ENCODE measurements at regions of chr20 and their contacts with region 1.

Region 1: GRCh38 chr20:50348096-50348495 is 157.5 kb downstream of the CEBPB start:
- DNase-seq: no peak
- ATAC-seq: peak; percentile 13
- H3K4me3 ChIP-seq: no peak overlapping the region
- H3K4me1 ChIP-seq: peaks cover 5% of the 10 kb centered on the region
- CTCF ChIP-seq: no peak

Region 2: GRCh38 chr20:49713753-49714712 is 634.1 kb before region 1 on chr20 and contains the start of gene B4GALT5:
- intact Hi-C with region 1: no loop called
- DNase-seq: peak; percentile 71 to 85 (median 83)
- ATAC-seq: peak; percentile 85
- H3K4me3 ChIP-seq: peak within 1 kb of the TSS; percentile 88
- H3K4me1 ChIP-seq: peaks cover 18% of the 10 kb centered on the region
- CTCF ChIP-seq: no peak
- total RNA-seq, gene B4GALT5: 52.4 to 65.1 (median 60.2) TPM

Region 3: GRCh38 chr20:50146732-50147662 is 201.1 kb before region 1 on chr20:
- intact Hi-C with region 1: no loop called
- DNase-seq: peak; percentile 62 to 78 (median 68)
- ATAC-seq: peak; percentile 72
- H3K4me3 ChIP-seq: no peak overlapping the region
- H3K4me1 ChIP-seq: peaks cover 35% of the 10 kb centered on the region
- CTCF ChIP-seq: no peak

Region 4: DNA sequence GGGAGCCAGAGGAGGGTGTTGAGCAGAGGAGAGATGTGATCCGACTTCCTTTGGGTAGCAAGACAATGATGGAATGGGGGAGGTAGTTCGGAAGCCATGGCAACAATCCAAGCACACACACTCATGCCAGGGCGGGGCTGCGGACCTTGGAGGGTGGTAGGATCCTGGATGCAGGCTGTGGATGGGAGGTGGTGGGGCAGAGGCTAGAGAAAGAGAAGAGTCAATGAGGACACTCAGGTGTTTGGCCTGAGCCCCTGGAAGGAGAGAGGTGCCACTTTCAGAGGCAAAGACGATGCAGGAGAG is 25.8 kb after region 1 on chr20:
- intact Hi-C with region 1: loop called in 1 of 2 experiments (anchors 2 kb)
- DNase-seq: no peak
- ATAC-seq: peak; percentile 48
- H3K4me3 ChIP-seq: no peak overlapping the region
- H3K4me1 ChIP-seq: peaks cover 22% of the 10 kb centered on the region
- CTCF ChIP-seq: no peak

Region 5: GRCh38 chr20:50837532-50838506 is 489.7 kb after region 1 on chr20:
- intact Hi-C with region 1: no loop called
- DNase-seq: no peak
- ATAC-seq: peak; percentile 41
- H3K4me3 ChIP-seq: no peak overlapping the region
- H3K4me1 ChIP-seq: no peaks in the 10 kb centered on the region
- CTCF ChIP-seq: no peak